ENCODE measurements at regions of chr12 and their contacts with region 1.

Region 1: GRCh38 chr12:118183705-118184104 is 47.8 kb downstream of the PEBP1 start:
- DNase-seq: no peak
- H3K4me3 ChIP-seq: no peak overlapping the region
- H3K27ac ChIP-seq: peak overlapping the region in 34 of 59 donors; percentile 17 to 76 (median 50)
- H3K27me3 ChIP-seq: no peaks in the 10 kb centered on the region
- CTCF ChIP-seq: no peak

Region 2: DNA sequence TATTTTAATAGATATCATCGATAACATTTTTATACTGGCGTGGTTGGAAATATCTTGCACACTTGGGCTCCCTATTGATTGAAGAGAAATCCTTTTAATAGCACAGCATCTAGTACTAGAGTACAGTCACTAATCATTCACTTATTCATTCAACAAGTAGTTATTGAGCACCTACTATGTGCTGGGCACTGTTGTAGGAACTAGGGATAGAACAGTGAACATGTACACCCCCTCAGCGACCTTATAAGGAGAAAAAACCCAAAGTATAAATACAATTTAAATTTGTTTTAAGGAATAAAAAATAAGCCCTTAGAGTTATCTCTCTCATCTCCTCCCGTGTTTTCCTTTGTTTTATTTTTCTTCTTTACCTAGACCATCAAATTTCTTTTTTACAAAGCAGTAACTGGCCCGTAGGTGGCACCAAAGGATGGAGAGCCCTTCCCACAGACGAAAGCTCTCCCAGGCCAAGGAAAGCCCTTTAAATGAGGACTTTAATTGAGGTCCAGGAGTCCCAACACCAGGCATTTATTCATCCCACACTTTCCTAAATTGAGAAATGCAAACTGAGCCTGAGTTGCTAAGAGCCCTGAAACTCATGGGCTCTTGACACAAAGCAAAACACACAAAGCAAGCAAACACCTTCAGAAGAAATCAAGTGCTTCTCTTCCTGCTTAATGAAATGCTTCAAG is 18.8 kb before region 1 on chr12:
- intact Hi-C with region 1: loop called in 1 of 2 experiments (anchors 2 kb)
- DNase-seq: peak in 2 of 10 donors; percentile 25 to 53
- H3K4me3 ChIP-seq: no peak overlapping the region
- H3K27ac ChIP-seq: peak overlapping the region in 14 of 59 donors; percentile 8 to 71 (median 22)
- H3K27me3 ChIP-seq: no peaks in the 10 kb centered on the region
- CTCF ChIP-seq: peak in 53 of 56 donors; percentile 28 to 73 (median 53)

Measured in dorsolateral prefrontal cortex (tissue), 120 donors.